Sigmoid colon (tissue), 7 donors: ENCODE measurements at regions of chr3 and their contacts with region 1.

Region 1: DNA sequence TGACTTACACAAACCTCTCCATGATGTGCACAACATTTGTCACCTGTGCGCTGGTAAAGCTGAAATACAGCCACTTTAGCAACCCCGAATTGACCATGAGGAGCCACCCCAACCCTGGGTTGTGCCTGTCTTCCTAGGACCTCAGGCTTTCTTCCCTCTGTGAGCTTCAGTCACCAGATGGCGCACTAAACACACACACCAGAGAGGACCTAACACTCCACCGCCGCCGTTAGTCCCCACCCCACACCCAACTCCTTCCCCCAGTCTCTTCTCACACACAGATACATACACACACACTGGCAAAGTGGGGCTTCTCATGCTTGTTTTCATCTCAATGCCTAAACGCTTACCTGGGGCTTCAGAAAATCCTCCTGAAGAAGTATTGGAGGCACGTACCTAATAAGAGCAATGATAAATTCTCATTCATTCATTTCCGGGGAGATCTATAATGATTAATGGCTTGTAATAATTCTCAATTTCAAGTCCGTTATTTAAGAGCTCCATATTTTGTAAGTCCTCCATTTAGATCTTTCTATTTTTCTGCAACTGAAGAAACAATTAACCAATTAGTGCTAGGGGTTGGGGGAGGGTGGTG is 2.1 kb upstream of the CCDC80 start:
- DNase-seq: peak; percentile 93
- H3K4me3 ChIP-seq: peak overlapping the region in 3 of 4 donors; percentile 11 to 15 (median 13)
- H3K27ac ChIP-seq: peak overlapping the region in 3 of 4 donors; percentile 11 to 86 (median 80)
- H3K4me1 ChIP-seq: peaks cover 0 to 65% (median 60%) of the 10 kb centered on the region in 4 donors
- H3K27me3 ChIP-seq: no peaks in the 10 kb centered on the region
- CTCF ChIP-seq: peak; percentile 77 to 81 (median 79)
- EP300 ChIP-seq: no peak
- POLR2A ChIP-seq: no peak

Region 2: GRCh38 chr3:112582244-112582874 is 60.6 kb before region 1 on chr3:
- intact Hi-C with region 1: loop called (anchors 5 kb)
- DNase-seq: no peak
- H3K4me3 ChIP-seq: no peak overlapping the region
- H3K27ac ChIP-seq: no peak overlapping the region
- H3K4me1 ChIP-seq: peaks cover 0 to 9% (median 0%) of the 10 kb centered on the region in 4 donors
- H3K27me3 ChIP-seq: no peaks in the 10 kb centered on the region
- CTCF ChIP-seq: peak; percentile 48 to 65 (median 50)
- EP300 ChIP-seq: no peak
- POLR2A ChIP-seq: no peak

Region 3: DNA sequence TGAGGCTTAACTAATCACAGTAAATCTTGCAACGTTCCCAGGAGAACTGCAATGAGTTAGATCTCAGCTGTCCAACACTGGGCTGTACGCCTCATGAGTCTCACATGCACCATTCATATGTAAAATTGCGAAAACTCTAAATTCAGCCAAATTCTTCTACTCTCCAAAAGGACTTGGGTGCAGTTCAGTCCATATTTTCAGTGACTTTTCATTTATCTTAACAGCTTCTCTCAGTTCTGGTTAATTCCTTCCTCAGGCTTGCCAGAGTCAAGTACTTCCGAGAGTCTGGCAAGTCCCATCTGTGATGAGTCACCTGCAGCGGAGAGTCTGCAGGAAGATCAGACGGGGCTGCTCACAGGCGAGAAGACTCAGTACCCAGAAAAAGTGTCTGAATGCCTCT is 13.6 kb before region 1 on chr3:
- intact Hi-C with region 1: no loop called
- DNase-seq: peak; percentile 94
- H3K4me3 ChIP-seq: no peak overlapping the region
- H3K27ac ChIP-seq: peak overlapping the region; percentile 58 to 86 (median 72)
- H3K4me1 ChIP-seq: peaks cover 2 to 79% (median 45%) of the 10 kb centered on the region in 4 donors
- H3K27me3 ChIP-seq: no peaks in the 10 kb centered on the region
- CTCF ChIP-seq: no peak
- EP300 ChIP-seq: peak in 2 of 4 donors; percentile 20 to 65
- POLR2A ChIP-seq: no peak

Region 4: GRCh38 chr3:112709911-112710310 is 66.9 kb after region 1 on chr3:
- intact Hi-C with region 1: no loop called
- DNase-seq: no peak
- H3K4me3 ChIP-seq: no peak overlapping the region
- H3K27ac ChIP-seq: no peak overlapping the region
- H3K4me1 ChIP-seq: no peaks in the 10 kb centered on the region
- H3K27me3 ChIP-seq: no peaks in the 10 kb centered on the region
- CTCF ChIP-seq: no peak
- EP300 ChIP-seq: no peak
- POLR2A ChIP-seq: no peak

Region 5: GRCh38 chr3:112734718-112735350 is 91.8 kb after region 1 on chr3:
- intact Hi-C with region 1: loop called (anchors 5 kb)
- DNase-seq: peak; percentile 71
- H3K4me3 ChIP-seq: no peak overlapping the region
- H3K27ac ChIP-seq: no peak overlapping the region
- H3K4me1 ChIP-seq: no peaks in the 10 kb centered on the region
- H3K27me3 ChIP-seq: no peaks in the 10 kb centered on the region
- CTCF ChIP-seq: peak in 3 of 4 experiments; percentile 36 to 58 (median 50)
- EP300 ChIP-seq: no peak
- POLR2A ChIP-seq: no peak

Region 6: GRCh38 chr3:112979240-112979832 is 336.3 kb after region 1 on chr3:
- intact Hi-C with region 1: loop called (anchors 1 kb)
- DNase-seq: no peak
- H3K4me3 ChIP-seq: no peak overlapping the region
- H3K27ac ChIP-seq: no peak overlapping the region
- H3K4me1 ChIP-seq: peaks cover 0 to 1% (median 0%) of the 10 kb centered on the region in 4 donors
- H3K27me3 ChIP-seq: no peaks in the 10 kb centered on the region
- CTCF ChIP-seq: peak; percentile 46 to 69 (median 50)
- EP300 ChIP-seq: no peak
- POLR2A ChIP-seq: no peak

Region 7: GRCh38 chr3:112990672-112991602 is 347.9 kb after region 1 on chr3 and contains the start of gene GTPBP8:
- intact Hi-C with region 1: loop called (anchors 5 kb)
- DNase-seq: peak; percentile 96
- H3K4me3 ChIP-seq: peak within 1 kb of the TSS; percentile 81 to 94 (median 88)
- H3K27ac ChIP-seq: peak within 1 kb of the TSS; percentile 95 to 96 (median 95)
- H3K4me1 ChIP-seq: peaks cover 0 to 20% (median 15%) of the 10 kb centered on the region in 4 donors
- H3K27me3 ChIP-seq: no peaks in the 10 kb centered on the region
- CTCF ChIP-seq: no peak
- EP300 ChIP-seq: peak in 1 of 4 donors; percentile 4
- POLR2A ChIP-seq: peak; percentile 93 to 94
- total RNA-seq, gene GTPBP8: 20.4 to 38.2 (median 32.8) TPM